ENCODE measurements at regions of chr2 and their contacts with region 1.

Region 1: DNA sequence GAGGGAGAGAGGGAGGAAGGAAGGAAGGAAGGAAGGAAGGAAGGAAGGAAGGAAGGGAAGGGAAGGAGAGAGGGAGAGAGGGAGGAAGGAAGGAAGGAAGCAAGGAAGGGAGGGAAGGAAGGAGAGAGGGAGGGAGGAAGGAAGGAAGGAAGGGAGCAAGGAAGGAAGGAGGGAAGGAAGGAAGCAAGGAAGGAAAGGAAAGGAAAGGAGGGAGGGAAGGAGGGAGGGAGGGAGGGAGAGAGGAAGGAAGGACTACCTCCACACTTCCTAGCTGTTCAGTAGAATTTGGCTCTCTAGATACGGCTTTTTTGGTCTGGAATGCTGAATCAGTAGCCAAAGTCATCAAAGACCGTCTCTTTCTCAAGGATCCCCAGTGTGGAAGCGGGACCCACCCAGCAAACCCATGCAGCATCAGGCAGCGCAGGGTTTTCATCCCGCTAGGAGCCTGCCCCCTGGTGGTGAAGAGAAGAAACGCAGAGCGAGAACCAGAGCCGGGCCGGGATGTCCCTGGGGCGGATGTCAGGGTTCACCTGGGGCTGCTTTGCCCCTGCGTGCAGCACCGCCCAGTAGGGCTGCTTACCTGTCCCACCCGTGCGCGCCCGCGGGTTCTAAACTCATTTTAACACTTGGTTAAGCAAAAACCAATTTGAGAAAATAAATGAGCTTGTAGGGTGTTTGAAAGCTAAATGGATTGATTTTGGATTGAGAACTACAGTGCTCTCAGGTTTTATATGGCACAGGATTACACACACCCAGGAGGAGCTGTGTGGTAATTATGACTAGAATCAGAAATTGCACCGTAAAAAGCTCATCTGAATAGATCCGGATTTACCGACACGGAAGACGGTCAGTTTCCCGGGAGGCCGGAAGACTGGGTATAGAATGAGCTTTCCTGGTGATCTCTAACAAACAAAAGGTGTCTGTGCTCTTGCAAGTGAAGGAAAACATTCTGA is 48.1 kb upstream of the ARL4C start:
- DNase-seq: peak; percentile 78 to 81
- ATAC-seq: peak; percentile 96 to 98
- H3K4me3 ChIP-seq: no peak overlapping the region
- H3K27ac ChIP-seq: peak overlapping the region; percentile 58 to 77; a peak in 5 of 6 replicates
- H3K4me1 ChIP-seq: peaks cover 3% of the 10 kb centered on the region; the same call in 1 of the 3 replicates
- CTCF ChIP-seq: peak; percentile 84
- EP300 ChIP-seq: no peak
- POLR2A ChIP-seq: no peak
- RAD21 ChIP-seq: peak; percentile 91 to 92

Region 2: GRCh38 chr2:233928594-233929351 is 616.2 kb before region 1 on chr2:
- CTCF ChIA-PET with region 1: interaction called, 11 read pairs
- POLR2A ChIA-PET with region 1: no interaction called
- DNase-seq: peak; percentile 16 to 55
- ATAC-seq: peak; percentile 44 to 72; a peak in 3 of 6 replicates
- H3K4me3 ChIP-seq: no peak overlapping the region
- H3K27ac ChIP-seq: peak overlapping the region in 1 of 2 experiments; percentile 74; a peak in 4 of 6 replicates
- H3K4me1 ChIP-seq: peaks cover 10% of the 10 kb centered on the region
- CTCF ChIP-seq: peak; percentile 75
- EP300 ChIP-seq: no peak
- POLR2A ChIP-seq: no peak
- RAD21 ChIP-seq: peak; percentile 61 to 66; a peak in 4 of 5 replicates

Region 3: GRCh38 chr2:233982421-233983121 is 562.4 kb before region 1 on chr2:
- CTCF ChIA-PET with region 1: interaction called, 60 read pairs
- POLR2A ChIA-PET with region 1: no interaction called
- DNase-seq: peak in 1 of 2 experiments; percentile 47
- ATAC-seq: peak; percentile 60 to 74; a peak in 5 of 6 replicates
- H3K4me3 ChIP-seq: no peak overlapping the region
- H3K27ac ChIP-seq: peak overlapping the region; percentile 84 to 98
- H3K4me1 ChIP-seq: peaks cover 52% of the 10 kb centered on the region
- CTCF ChIP-seq: no peak
- EP300 ChIP-seq: no peak; a peak in 1 of 5 replicates
- POLR2A ChIP-seq: no peak
- RAD21 ChIP-seq: no peak

Region 4: DNA sequence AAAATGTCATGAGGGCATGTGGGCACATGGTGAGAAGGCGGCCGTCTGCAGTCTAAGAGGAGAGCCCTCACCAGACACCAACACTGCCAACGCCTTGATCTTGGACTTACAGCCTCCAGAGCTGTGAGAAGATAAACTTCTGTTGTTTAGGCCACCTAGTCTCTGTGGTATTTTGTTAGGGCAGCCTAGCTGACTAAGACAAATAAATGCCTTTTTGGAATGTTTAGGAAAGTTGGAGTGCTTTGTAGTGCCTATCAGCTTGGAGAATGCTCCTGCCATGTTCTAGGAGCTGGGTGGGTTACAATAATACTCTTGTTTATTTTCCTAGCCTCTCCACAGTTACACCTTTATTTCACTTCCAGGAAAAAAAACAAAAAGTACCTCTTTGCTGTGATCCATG is 402.4 kb before region 1 on chr2:
- CTCF ChIA-PET with region 1: interaction called, 33 read pairs
- POLR2A ChIA-PET with region 1: no interaction called
- DNase-seq: no peak
- ATAC-seq: peak in 1 of 2 experiments; percentile 40; a peak in 2 of 6 replicates
- H3K4me3 ChIP-seq: no peak overlapping the region
- H3K27ac ChIP-seq: peak overlapping the region; percentile 32 to 67; a peak in 5 of 6 replicates
- H3K4me1 ChIP-seq: peaks cover 26% of the 10 kb centered on the region
- CTCF ChIP-seq: no peak
- EP300 ChIP-seq: no peak
- POLR2A ChIP-seq: no peak
- RAD21 ChIP-seq: no peak

Region 5: GRCh38 chr2:234500394-234501006 is 44.4 kb before region 1 on chr2:
- CTCF ChIA-PET with region 1: interaction called, 30 read pairs
- POLR2A ChIA-PET with region 1: no interaction called
- DNase-seq: peak in 1 of 2 experiments; percentile 83
- ATAC-seq: peak; percentile 45 to 73; a peak in 5 of 6 replicates
- H3K4me3 ChIP-seq: no peak overlapping the region
- H3K27ac ChIP-seq: peak overlapping the region; percentile 55 to 99
- H3K4me1 ChIP-seq: peaks cover 34% of the 10 kb centered on the region
- CTCF ChIP-seq: peak; percentile 87
- EP300 ChIP-seq: no peak
- POLR2A ChIP-seq: no peak
- RAD21 ChIP-seq: peak; percentile 98

Region 6: GRCh38 chr2:234528410-234529148 is 16.4 kb before region 1 on chr2:
- CTCF ChIA-PET with region 1: interaction called, 27 read pairs
- POLR2A ChIA-PET with region 1: no interaction called
- DNase-seq: no peak
- ATAC-seq: peak in 1 of 2 experiments; percentile 51; a peak in 3 of 6 replicates
- H3K4me3 ChIP-seq: no peak overlapping the region
- H3K27ac ChIP-seq: no peak overlapping the region
- H3K4me1 ChIP-seq: no peaks in the 10 kb centered on the region
- CTCF ChIP-seq: no peak
- EP300 ChIP-seq: no peak
- POLR2A ChIP-seq: no peak
- RAD21 ChIP-seq: 0 out of 5 replicates have a peak, but pooled peaks of 1 of the 2 experiments have one; percentile 11

Region 7: GRCh38 chr2:235098736-235099494 is 554.0 kb after region 1 on chr2:
- CTCF ChIA-PET with region 1: interaction called, 12 read pairs
- POLR2A ChIA-PET with region 1: no interaction called
- DNase-seq: peak in 1 of 2 experiments; percentile 69
- ATAC-seq: peak; percentile 79 to 83
- H3K4me3 ChIP-seq: no peak overlapping the region; the same call in 2 of the 3 replicates
- H3K27ac ChIP-seq: peak overlapping the region; percentile 80 to 89
- H3K4me1 ChIP-seq: peaks cover 34% of the 10 kb centered on the region
- CTCF ChIP-seq: no peak; the same call in 2 of the 3 replicates
- EP300 ChIP-seq: peak; percentile 82 to 93; a peak in 4 of 5 replicates
- POLR2A ChIP-seq: no peak
- RAD21 ChIP-seq: peak; percentile 1 to 24; a peak in 1 of 5 replicates

Measured in A549 (cell line).